ENCODE measurements at regions of chr10 and their contacts with region 1.

Region 1: DNA sequence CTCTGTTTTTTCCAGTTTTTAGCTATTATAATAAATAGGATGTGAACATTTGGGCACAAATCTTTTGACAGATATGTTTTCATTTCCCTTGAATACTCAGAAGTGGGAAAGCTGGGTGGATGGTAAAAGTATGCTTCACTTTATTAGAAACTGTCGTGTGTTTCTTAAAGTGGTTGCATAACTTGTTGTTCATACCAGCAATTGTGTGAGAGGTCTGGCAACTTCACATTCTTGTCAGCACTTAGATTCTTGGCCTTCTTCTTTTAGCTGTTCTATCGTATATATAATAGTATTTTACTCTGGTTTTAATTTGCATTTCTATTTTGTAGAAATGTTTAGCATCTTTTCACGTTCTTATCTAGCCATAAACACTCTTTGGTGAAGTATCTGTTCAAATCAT is 894.4 kb downstream of the KCNMA1 start:
- DNase-seq: no peak
- H3K4me3 ChIP-seq: no peak overlapping the region
- H3K27ac ChIP-seq: no peak overlapping the region
- H3K4me1 ChIP-seq: no peaks in the 10 kb centered on the region
- H3K27me3 ChIP-seq: no peaks in the 10 kb centered on the region
- CTCF ChIP-seq: no peak
- POLR2A ChIP-seq: no peak

Region 2: DNA sequence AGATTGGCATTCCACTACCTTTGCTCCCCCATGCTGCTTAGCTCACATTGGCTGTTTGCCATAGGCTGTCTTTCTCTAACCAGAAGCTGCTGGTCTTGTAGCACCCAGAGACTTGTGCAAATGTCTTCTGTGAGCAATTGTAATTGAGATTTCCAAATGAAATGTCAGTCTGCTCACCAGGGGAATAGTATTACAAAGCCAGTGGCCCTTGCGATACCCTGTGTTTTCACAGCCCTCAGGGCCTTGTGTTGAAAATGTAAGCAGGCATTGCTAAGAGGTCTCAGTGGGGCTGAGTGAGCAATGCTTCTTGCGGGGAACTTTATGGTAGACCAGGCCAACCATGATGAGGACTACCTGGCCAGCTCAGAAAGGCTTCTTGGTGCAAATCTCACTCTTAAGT is 565.2 kb before region 1 on chr10:
- CTCF ChIA-PET with region 1: no interaction called
- POLR2A ChIA-PET with region 1: no interaction called
- dilution Hi-C with region 1: no loop called
- intact Hi-C with region 1: loop called (anchors 5 kb)
- DNase-seq: no peak
- H3K4me3 ChIP-seq: no peak overlapping the region
- H3K27ac ChIP-seq: no peak overlapping the region
- H3K4me1 ChIP-seq: no peaks in the 10 kb centered on the region
- H3K27me3 ChIP-seq: no peaks in the 10 kb centered on the region
- CTCF ChIP-seq: no peak
- POLR2A ChIP-seq: no peak

Measured in endothelial cell of umbilical vein (primary cell).